Head of caudate nucleus (tissue), 42 donors: ENCODE measurements at regions of chr2 and their contacts with region 1.

Region 1: GRCh38 chr2:31319406-31320175 is 85.6 kb downstream of the EHD3 start:
- DNase-seq: peak in 1 of 42 donors; percentile 18

Region 2: DNA sequence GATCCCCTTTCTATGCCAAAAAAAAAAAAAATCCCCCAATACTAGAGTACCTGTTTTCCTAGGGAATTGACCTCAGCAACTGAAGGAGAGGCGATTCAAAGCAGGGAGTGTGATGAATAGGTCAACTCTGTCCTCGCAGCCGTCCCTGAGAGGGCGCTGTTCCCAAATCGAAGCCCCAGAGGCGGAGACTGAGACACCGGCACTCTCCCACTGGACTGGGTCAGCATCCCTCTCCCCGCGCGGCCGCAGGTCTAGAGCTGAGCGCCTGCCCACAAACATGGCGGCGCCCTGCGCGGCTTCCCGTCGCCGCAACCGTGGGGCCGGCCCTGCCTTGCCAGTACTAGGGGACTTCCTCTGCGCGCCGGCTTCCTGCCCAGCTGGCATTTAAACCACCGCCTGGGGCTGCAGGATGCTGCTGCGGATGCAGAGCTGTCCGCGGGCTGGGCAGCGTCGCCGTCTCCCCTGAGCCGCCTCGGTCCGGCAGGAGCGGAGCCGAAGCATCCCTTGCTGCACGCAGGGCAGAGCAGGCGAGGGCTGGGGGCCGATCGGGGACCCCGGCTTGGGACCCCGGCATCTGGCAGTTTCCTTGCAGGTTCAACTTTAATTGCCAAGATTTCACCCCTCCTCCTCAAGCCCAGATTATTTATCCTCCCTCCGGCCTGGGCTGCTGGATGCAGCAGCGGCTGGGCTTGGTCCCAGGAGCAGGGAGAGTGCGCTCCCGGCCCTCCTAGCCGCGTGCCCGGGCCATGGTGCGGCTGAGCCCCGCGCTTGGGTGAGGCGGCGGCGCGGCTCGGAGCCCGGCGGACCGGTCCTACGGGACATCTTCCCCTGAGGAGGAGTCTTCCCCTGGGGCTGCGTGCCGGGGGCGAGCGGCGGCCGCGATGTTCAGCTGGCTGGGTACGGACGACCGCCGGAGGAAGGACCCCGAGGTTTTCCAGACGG is 85.6 kb before region 1 on chr2 and contains the start of gene EHD3:
- intact Hi-C with region 1: loop called (anchors 10 kb)
- DNase-seq: peak; percentile 85 to 97 (median 93)

Region 3: GRCh38 chr2:31476511-31477180 is 157.1 kb after region 1 on chr2:
- intact Hi-C with region 1: no loop called
- DNase-seq: no peak

Region 4: DNA sequence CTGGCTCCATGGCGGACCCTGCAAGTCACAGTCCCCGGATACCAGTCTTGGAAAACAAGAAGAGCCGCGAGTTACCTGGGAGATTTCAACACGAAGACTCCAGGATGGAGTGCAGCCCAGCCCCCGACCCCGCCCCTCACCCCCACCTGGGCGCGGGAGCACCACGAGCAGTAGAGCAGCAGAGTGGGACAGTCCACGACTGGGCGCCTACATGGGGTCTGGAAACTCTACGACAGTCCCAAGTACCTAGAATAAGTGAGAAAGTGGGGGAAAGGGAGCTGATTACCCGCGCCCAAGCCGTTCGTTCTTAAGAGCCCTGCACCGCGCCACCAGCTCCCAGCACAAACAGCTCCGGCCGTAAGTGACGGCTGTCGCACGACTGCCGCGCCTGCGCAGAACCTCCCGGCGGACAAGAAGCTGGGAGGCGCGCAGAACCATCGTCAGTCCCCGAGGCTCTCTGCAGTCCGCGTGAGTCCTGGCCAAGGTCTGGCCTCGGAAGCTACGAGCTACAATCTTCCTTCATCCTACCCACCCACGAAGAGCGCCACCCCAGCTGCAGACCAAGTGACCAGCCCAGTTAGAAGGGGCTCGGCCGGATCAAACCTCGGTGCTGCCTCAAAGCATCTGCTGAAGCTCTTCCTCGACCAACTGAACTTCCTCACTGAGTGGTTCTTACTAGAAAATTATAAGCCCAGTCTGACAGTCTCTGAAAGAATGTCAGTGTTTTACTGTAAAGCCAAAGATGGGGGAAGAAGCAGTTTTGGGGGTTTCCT is 720.0 kb after region 1 on chr2 and contains the start of gene DPY30:
- intact Hi-C with region 1: no loop called
- DNase-seq: peak; percentile 87 to 96 (median 93)